PC-9 (cell line): ENCODE measurements at regions of chr22 and their contacts with region 1.

Region 1: GRCh38 chr22:44625981-44626687 is 75.9 kb upstream of the PRR5 start:
- DNase-seq: peak in 1 of 2 experiments; percentile 74
- H3K4me3 ChIP-seq: no peak overlapping the region
- H3K27ac ChIP-seq: no peak overlapping the region
- H3K4me1 ChIP-seq: no peaks in the 10 kb centered on the region
- H3K27me3 ChIP-seq: peaks cover 35% of the 10 kb centered on the region
- CTCF ChIP-seq: peak; percentile 99

Region 2: DNA sequence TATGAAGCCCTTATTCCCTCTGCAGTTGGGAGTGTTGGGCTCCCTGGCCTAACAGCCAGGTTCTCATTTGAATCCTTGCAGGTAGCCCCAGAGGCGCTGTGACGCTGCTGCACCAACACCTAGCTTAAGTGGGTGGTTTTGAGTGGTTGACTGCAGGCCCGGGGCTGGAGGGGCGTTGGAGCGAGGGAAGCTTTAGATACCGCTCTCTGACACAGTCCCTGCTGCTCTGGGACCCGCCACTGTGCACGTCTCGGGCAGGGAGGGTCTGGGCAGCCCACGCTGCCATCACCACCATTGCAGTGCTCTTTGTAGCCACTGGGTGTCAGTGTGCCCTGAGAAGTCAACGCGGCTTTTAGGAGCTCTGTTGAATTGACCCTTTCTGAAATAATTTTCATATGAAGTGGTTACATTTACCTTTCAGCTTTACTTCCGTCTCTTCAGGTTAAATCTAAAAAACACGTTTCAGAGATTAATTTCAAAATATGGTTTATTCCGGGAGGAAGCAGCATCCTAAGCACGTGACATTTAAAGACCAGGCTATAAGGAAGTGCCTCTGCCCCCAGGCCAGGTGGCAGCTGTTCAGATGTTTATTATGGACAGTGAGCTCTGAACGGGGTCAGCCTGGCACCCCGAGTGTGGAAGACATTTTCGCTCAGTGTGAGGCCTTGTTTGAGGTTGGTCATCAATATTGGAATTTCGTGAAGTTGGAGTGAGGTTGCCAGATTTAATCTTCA is 632.9 kb before region 1 on chr22:
- CTCF ChIA-PET with region 1: interaction called, 9 read pairs
- POLR2A ChIA-PET with region 1: interaction called, 3 read pairs
- intact Hi-C with region 1: loop called (anchors 1 kb)
- DNase-seq: peak; percentile 34 to 44
- H3K4me3 ChIP-seq: no peak overlapping the region
- H3K27ac ChIP-seq: no peak overlapping the region
- H3K4me1 ChIP-seq: no peaks in the 10 kb centered on the region
- H3K27me3 ChIP-seq: no peaks in the 10 kb centered on the region
- CTCF ChIP-seq: peak; percentile 99

Region 3: GRCh38 chr22:44080936-44081861 is 544.9 kb before region 1 on chr22:
- CTCF ChIA-PET with region 1: interaction called, 4 read pairs
- POLR2A ChIA-PET with region 1: no interaction called
- intact Hi-C with region 1: loop called (anchors 1 kb)
- DNase-seq: peak in 1 of 2 experiments; percentile 62
- H3K4me3 ChIP-seq: no peak overlapping the region
- H3K27ac ChIP-seq: no peak overlapping the region
- H3K4me1 ChIP-seq: no peaks in the 10 kb centered on the region
- H3K27me3 ChIP-seq: no peaks in the 10 kb centered on the region
- CTCF ChIP-seq: peak; percentile 90

Region 4: DNA sequence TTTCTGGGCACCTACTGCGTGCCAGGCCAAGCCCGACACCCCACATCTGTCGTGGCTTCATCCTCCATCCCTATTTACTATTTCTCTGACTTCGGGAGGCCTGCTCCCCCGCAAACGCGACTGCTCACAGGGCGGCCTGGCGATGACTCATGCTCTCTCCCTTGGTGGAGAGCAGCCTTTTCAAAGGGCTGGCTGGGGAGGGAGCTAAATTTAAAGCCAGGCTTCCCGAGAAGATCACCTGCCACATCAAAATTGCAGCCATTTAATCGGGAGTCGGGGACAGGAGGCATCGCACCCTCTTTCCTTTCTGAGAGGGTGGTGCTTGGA is 288.5 kb before region 1 on chr22:
- CTCF ChIA-PET with region 1: interaction called, 3 read pairs
- POLR2A ChIA-PET with region 1: no interaction called
- intact Hi-C with region 1: loop called (anchors 2 kb)
- DNase-seq: peak; percentile 61 to 66
- H3K4me3 ChIP-seq: no peak overlapping the region
- H3K27ac ChIP-seq: no peak overlapping the region
- H3K4me1 ChIP-seq: peaks cover 35% of the 10 kb centered on the region
- H3K27me3 ChIP-seq: peaks cover 2% of the 10 kb centered on the region; the same call in 1 of the 2 replicates
- CTCF ChIP-seq: no peak